ENCODE measurements at regions of chr15 and their contacts with region 1.

Region 1: GRCh38 chr15:69462493-69463181 is 10.0 kb downstream of the RPLP1 start:
- DNase-seq: peak; percentile 89
- H3K4me3 ChIP-seq: peak overlapping the region; percentile 36
- H3K27me3 ChIP-seq: no peaks in the 10 kb centered on the region
- CTCF ChIP-seq: peak; percentile 94

Region 2: GRCh38 chr15:69225355-69226025 is 237.1 kb before region 1 on chr15:
- CTCF ChIA-PET with region 1: no interaction called
- POLR2A ChIA-PET with region 1: no interaction called
- DNase-seq: peak; percentile 1
- H3K4me3 ChIP-seq: no peak overlapping the region
- H3K27me3 ChIP-seq: no peaks in the 10 kb centered on the region
- CTCF ChIP-seq: 0 out of 2 replicates have a peak, but pooled peaks have one; percentile 21

Region 3: DNA sequence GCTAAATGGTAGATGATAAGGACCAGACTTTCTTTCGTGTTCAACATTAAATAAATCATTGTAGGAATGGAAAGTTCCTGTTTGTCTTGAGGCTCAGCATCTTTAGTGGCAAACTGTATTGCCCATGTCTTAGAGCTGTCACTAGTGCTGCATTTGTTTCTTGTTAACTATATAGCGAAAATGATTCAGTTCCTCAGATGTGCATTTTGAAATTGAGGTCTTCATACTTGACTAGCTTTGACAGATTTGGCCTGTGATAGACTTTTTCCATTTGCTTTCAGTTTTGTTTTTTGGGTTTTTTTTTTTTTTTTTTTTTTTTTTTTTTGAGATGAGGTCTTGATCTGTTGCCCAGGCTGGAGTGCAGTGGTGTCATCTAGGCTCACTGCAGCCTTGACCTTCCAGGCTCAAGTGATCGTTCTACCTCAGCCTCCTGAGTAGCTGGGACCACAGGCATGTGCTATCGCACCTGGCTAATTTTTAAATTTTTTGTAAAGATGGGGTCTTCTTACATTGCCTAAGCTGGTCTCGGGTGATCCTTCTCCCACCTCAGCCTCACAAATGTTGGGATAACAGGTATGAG is 19.5 kb before region 1 on chr15:
- CTCF ChIA-PET with region 1: interaction called, 6 read pairs
- POLR2A ChIA-PET with region 1: interaction called, 16 read pairs
- DNase-seq: no peak
- H3K4me3 ChIP-seq: no peak overlapping the region
- H3K27me3 ChIP-seq: no peaks in the 10 kb centered on the region
- CTCF ChIP-seq: no peak

Measured in BJ (cell line).